ENCODE measurements at regions of chr9 and their contacts with region 1.

Region 1: DNA sequence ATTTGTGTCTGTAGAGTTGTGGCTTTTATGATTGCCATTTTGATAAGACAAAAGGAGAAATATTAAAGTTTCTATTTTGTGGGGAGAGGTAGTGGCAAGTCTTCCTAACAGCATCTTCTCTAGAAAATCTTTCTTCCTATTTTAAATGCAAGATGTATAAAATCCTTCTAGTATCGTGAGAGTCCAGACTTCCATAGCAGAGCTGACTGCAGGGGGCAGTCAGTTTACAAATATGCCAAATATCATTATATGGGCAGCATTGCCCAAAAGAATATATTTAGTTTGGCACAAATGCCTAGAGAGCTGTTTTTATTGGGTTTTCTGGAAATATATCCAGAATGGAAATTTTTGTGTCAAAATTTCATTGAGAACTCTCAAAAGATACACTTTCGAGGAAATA is 82.1 kb upstream of the ALDH1A1 start:
- DNase-seq: no peak
- ATAC-seq: no peak
- H3K4me3 ChIP-seq: no peak overlapping the region
- H3K27ac ChIP-seq: no peak overlapping the region
- H3K4me1 ChIP-seq: peaks cover 4 to 31% of the 10 kb centered on the region in 2 experiments; a peak in 4 of 5 replicates
- H3K27me3 ChIP-seq: no peaks in the 10 kb centered on the region
- CTCF ChIP-seq: peak in 1 of 3 experiments; percentile 6; a peak in 1 of 6 replicates
- EP300 ChIP-seq: no peak
- POLR2A ChIP-seq: no peak
- RAD21 ChIP-seq: no peak

Region 2: DNA sequence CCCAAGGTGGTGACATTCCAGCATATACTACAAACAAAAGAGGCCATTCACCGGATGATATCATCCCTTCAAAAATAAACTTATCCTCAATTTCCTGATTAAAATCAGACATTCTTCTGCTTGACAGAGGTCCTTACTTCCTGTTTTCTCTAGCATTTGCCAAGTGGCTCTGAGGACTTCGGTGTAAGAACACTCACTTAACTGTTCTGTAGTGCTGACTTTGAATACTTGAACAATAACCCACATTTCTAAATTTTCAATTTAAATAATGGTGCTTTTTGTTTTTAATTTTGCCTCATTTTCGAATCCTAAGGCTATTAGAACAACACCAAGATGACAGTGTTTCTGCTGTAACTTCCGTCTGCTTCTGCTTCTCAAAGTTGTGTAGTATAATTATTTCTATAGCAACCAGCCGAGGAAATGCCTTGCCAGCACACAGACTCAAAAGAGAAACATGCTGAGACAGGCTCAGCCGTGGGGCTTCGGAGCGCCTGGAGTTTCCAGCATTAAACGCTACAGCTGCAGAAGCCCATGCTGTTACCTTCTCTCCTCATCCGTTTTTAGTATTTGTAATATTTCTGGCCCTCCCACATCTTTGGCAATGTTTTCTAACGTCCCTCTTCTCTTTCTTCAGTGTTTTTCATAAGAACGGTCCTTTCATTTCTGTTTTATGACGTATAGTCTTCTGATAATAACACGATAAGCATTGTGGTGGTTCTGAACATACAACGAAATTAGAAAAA is 97.2 kb after region 1 on chr9:
- CTCF ChIA-PET with region 1: no interaction called
- POLR2A ChIA-PET with region 1: no interaction called
- in situ Hi-C with region 1: no loop called
- intact Hi-C with region 1: loop called (anchors 5 kb)
- DNase-seq: peak in 2 of 4 experiments; percentile 29 to 70
- ATAC-seq: peak; percentile 82
- H3K4me3 ChIP-seq: peak overlapping the region; percentile 33
- H3K27ac ChIP-seq: peak overlapping the region; percentile 85
- H3K4me1 ChIP-seq: peaks cover 0 to 25% of the 10 kb centered on the region in 2 experiments; a peak in 3 of 5 replicates
- H3K27me3 ChIP-seq: no peaks in the 10 kb centered on the region
- CTCF ChIP-seq: no peak
- EP300 ChIP-seq: no peak
- POLR2A ChIP-seq: peak; percentile 57
- RAD21 ChIP-seq: no peak

Region 3: DNA sequence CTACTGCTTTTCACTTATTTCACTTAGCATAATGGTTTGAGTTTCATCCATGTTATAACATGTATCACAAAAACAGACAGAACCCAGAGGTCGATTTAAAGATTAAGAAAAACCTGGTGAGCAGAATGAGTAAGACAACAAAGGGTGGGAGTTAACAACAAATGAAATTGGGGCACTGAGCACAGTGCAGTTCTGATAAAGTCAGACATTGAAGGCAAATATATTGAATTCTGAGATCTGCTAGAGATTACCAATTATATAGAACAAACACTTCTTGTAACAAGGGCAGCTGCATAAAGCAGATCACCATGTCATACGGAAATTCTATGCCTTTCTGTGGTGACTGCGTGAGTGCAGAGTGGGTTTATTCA is 944.9 kb after region 1 on chr9:
- CTCF ChIA-PET with region 1: no interaction called
- POLR2A ChIA-PET with region 1: no interaction called
- in situ Hi-C with region 1: no loop called
- intact Hi-C with region 1: loop called (anchors 2 kb)
- DNase-seq: peak in 2 of 4 experiments; percentile 3 to 26
- ATAC-seq: peak; percentile 47
- H3K4me3 ChIP-seq: peak overlapping the region; percentile 48
- H3K27ac ChIP-seq: peak overlapping the region; percentile 94
- H3K4me1 ChIP-seq: no peaks in the 10 kb centered on the region
- H3K27me3 ChIP-seq: no peaks in the 10 kb centered on the region
- CTCF ChIP-seq: no peak
- EP300 ChIP-seq: no peak
- POLR2A ChIP-seq: no peak
- RAD21 ChIP-seq: no peak